HepG2 (cell line): ENCODE measurements at regions of chr9 and their contacts with region 1.

Region 1: GRCh38 chr9:127598839-127599548 is 13.1 kb upstream of the STXBP1 start:
- DNase-seq: no peak
- ATAC-seq: peak; percentile 63
- H3K4me3 ChIP-seq: no peak overlapping the region
- H3K27ac ChIP-seq: no peak overlapping the region
- H3K4me1 ChIP-seq: peaks cover 12% of the 10 kb centered on the region
- H3K27me3 ChIP-seq: no peaks in the 10 kb centered on the region
- CTCF ChIP-seq: no peak
- EP300 ChIP-seq: no peak
- POLR2A ChIP-seq: no peak
- RAD21 ChIP-seq: no peak

Region 2: DNA sequence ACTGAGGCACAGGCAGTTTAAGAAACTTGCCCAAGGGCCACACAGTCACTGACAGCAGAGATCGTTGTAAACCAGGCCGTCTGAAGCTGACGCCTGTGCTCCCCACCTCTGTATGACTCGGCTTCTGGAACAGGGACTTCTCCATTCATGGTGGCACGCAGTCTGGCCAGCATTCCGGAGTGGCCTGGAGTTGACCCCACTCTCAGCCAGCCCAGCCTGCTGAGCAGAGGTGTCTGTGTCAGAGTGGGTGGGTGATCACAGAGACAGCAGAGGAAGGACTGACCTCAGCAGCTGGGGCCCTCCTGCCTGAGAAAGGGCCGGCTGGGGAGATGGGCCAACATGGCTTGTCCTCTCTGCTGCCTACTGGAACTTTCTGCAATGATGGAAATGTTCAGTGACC is 135.1 kb before region 1 on chr9:
- CTCF ChIA-PET with region 1: no interaction called
- POLR2A ChIA-PET with region 1: no interaction called
- in situ Hi-C with region 1: no loop called
- intact Hi-C with region 1: no loop called
- DNase-seq: no peak
- ATAC-seq: no peak
- H3K4me3 ChIP-seq: no peak overlapping the region
- H3K27ac ChIP-seq: no peak overlapping the region
- H3K4me1 ChIP-seq: peaks cover 13% of the 10 kb centered on the region
- H3K27me3 ChIP-seq: no peaks in the 10 kb centered on the region
- CTCF ChIP-seq: no peak
- EP300 ChIP-seq: no peak
- POLR2A ChIP-seq: no peak
- RAD21 ChIP-seq: no peak

Region 3: DNA sequence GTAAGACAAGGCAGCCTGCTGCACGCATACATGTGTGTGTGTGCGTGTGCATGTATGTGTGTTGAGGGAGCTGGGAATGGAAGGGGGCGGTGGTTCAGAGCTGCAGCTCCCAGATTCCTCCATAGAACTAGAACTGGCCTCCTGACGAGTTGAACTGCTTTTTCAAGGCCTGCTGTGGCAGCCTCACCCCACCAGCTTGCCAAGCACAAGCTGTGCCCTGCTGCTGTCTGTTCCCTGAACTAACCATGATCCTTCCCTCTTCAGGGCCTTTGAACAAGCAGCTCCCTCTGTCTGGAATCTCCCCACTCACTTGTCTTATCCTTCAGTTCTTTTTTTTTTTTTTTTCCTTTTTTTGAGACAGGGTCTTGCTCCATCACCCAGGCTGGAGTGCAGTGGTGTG is 125.1 kb before region 1 on chr9:
- CTCF ChIA-PET with region 1: no interaction called
- POLR2A ChIA-PET with region 1: no interaction called
- in situ Hi-C with region 1: no loop called
- intact Hi-C with region 1: no loop called
- DNase-seq: no peak
- ATAC-seq: no peak
- H3K4me3 ChIP-seq: no peak overlapping the region
- H3K27ac ChIP-seq: no peak overlapping the region
- H3K4me1 ChIP-seq: no peaks in the 10 kb centered on the region
- H3K27me3 ChIP-seq: no peaks in the 10 kb centered on the region
- CTCF ChIP-seq: no peak
- EP300 ChIP-seq: no peak
- POLR2A ChIP-seq: no peak
- RAD21 ChIP-seq: no peak

Region 4: GRCh38 chr9:127927457-127927987 is 328.5 kb after region 1 on chr9:
- CTCF ChIA-PET with region 1: no interaction called
- POLR2A ChIA-PET with region 1: no interaction called
- in situ Hi-C with region 1: loop called (anchors 5 kb)
- intact Hi-C with region 1: no loop called
- DNase-seq: no peak
- ATAC-seq: peak; percentile 3
- H3K4me3 ChIP-seq: peak overlapping the region in 2 of 3 experiments; percentile 28 to 50; a peak in 3 of 6 replicates
- H3K27ac ChIP-seq: no peak overlapping the region
- H3K4me1 ChIP-seq: peaks cover 36% of the 10 kb centered on the region
- H3K27me3 ChIP-seq: peaks cover 0 to 38% of the 10 kb centered on the region in 2 experiments
- CTCF ChIP-seq: no peak
- EP300 ChIP-seq: no peak
- POLR2A ChIP-seq: no peak
- RAD21 ChIP-seq: no peak